Common myeloid progenitor, CD34-positive (primary cell): ENCODE measurements at regions of chr1 and their contacts with region 1.

Region 1: DNA sequence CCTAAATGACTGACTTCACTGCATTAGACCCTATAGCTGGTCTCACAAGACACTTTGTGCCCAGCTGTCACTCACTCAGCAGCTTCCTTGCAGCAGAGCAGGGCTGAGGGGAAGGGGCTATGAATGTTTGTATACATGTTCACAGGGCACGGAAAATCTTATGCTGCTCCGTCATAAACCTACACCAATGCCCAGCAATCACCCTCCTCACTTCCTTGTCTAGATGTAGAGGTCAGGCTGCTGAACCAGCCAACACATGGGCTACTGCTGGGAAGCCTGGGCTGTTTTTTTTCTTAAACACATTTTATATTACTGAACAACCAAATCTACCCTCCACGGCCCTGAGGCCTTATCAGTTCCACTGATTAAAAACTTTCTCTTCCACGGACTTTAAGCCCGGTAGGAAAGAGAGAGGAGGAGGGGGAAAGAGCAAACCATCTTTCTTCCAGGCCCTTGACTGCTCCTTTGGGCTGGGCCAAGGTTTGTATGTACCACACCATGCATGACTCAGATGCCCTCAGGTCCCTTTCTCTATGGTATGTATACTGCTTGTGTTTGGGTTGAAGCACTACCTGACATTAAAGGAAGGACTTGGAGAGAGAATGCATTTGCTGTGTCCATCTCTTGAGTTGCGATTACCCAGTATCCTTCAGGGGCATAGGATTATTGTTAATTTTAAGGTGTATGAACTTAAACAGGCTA is 12.7 kb downstream of the MTFR1L start:
- DNase-seq: no peak
- H3K4me3 ChIP-seq: peak overlapping the region in 2 of 7 experiments; percentile 8 to 27
- H3K27ac ChIP-seq: peak overlapping the region in 1 of 2 experiments; percentile 20
- H3K4me1 ChIP-seq: peaks cover 15 to 32% (median 22%) of the 10 kb centered on the region in 4 experiments
- H3K27me3 ChIP-seq: no peaks in the 10 kb centered on the region

Region 2: GRCh38 chr1:25844536-25845337 is 12.2 kb after region 1 on chr1:
- CTCF ChIA-PET with region 1: interaction called, 22 read pairs
- POLR2A ChIA-PET with region 1: interaction called, 3 read pairs
- DNase-seq: no peak
- H3K4me3 ChIP-seq: no peak overlapping the region
- H3K27ac ChIP-seq: no peak overlapping the region
- H3K4me1 ChIP-seq: peaks cover 0 to 17% (median 2%) of the 10 kb centered on the region in 4 experiments
- H3K27me3 ChIP-seq: no peaks in the 10 kb centered on the region